Mammary epithelial cell (primary cell): ENCODE measurements at regions of chr18 and their contacts with region 1.

Region 1: GRCh38 chr18:8969639-8970390 is 132.7 kb upstream of the NDUFV2 start:
- DNase-seq: peak; percentile 45
- H3K4me3 ChIP-seq: no peak overlapping the region
- H3K27ac ChIP-seq: no peak overlapping the region
- H3K4me1 ChIP-seq: no peaks in the 10 kb centered on the region
- H3K27me3 ChIP-seq: no peaks in the 10 kb centered on the region
- CTCF ChIP-seq: no peak

Region 2: GRCh38 chr18:8876887-8877286 is 92.9 kb before region 1 on chr18:
- CTCF ChIA-PET with region 1: no interaction called
- dilution Hi-C with region 1: loop called (anchors 5 kb)
- in situ Hi-C with region 1: no loop called
- intact Hi-C with region 1: no loop called
- DNase-seq: peak; percentile 40
- H3K4me3 ChIP-seq: no peak overlapping the region
- H3K27ac ChIP-seq: no peak overlapping the region
- H3K4me1 ChIP-seq: peaks cover 3% of the 10 kb centered on the region
- H3K27me3 ChIP-seq: no peaks in the 10 kb centered on the region
- CTCF ChIP-seq: no peak

Region 3: GRCh38 chr18:8998481-8999217 is 28.8 kb after region 1 on chr18:
- CTCF ChIA-PET with region 1: no interaction called
- dilution Hi-C with region 1: no loop called
- in situ Hi-C with region 1: no loop called
- intact Hi-C with region 1: no loop called
- DNase-seq: no peak
- H3K4me3 ChIP-seq: no peak overlapping the region
- H3K27ac ChIP-seq: no peak overlapping the region
- H3K4me1 ChIP-seq: peaks cover 9% of the 10 kb centered on the region
- H3K27me3 ChIP-seq: no peaks in the 10 kb centered on the region
- CTCF ChIP-seq: no peak

Region 4: GRCh38 chr18:9449600-9450414 is 480.0 kb after region 1 on chr18:
- CTCF ChIA-PET with region 1: no interaction called
- dilution Hi-C with region 1: no loop called
- in situ Hi-C with region 1: no loop called
- intact Hi-C with region 1: no loop called
- DNase-seq: no peak
- H3K4me3 ChIP-seq: no peak overlapping the region
- H3K27ac ChIP-seq: no peak overlapping the region
- H3K4me1 ChIP-seq: peaks cover 12% of the 10 kb centered on the region
- H3K27me3 ChIP-seq: no peaks in the 10 kb centered on the region
- CTCF ChIP-seq: no peak